WTC11 (cell line): ENCODE measurements at regions of chr9 and their contacts with region 1.

Region 1: GRCh38 chr9:124617471-124618141 is 110.4 kb upstream of the NR5A1 start:
- DNase-seq: peak; percentile 90
- ATAC-seq: peak; percentile 90
- H3K4me3 Mint-ChIP-seq: no peak overlapping the region
- H3K27ac Mint-ChIP-seq: peak overlapping the region; percentile 94
- H3K4me1 Mint-ChIP-seq: peaks cover 56% of the 10 kb centered on the region
- H3K27me3 Mint-ChIP-seq: no peaks in the 10 kb centered on the region
- CTCF ChIP-seq: peak; percentile 89

Region 2: GRCh38 chr9:124537926-124538325 is 79.7 kb before region 1 on chr9:
- CTCF ChIA-PET with region 1: interaction called, 20 read pairs
- POLR2A ChIA-PET with region 1: no interaction called
- DNase-seq: no peak
- ATAC-seq: no peak
- H3K4me3 Mint-ChIP-seq: no peak overlapping the region
- H3K27ac Mint-ChIP-seq: no peak overlapping the region
- H3K4me1 Mint-ChIP-seq: no peaks in the 10 kb centered on the region
- H3K27me3 Mint-ChIP-seq: no peaks in the 10 kb centered on the region
- CTCF ChIP-seq: no peak

Region 3: DNA sequence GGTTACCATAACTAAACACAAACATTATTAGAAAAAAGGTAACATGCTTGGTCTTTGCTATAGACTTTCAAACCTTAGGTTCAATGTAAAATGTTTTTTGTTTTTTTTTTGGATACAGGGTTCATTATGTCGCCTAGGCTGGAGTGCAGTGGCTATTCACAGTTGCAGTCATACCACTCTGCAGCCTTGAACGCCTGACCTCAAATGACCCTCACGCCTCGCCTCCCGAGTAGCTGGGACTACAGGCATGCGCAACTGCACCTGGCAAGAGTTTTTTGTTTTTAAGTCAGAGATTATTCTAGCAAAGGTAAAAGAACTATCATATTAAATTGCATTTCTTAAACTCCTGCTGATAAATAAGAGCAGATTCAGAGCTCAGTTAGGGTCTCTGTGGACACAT is 55.3 kb before region 1 on chr9:
- CTCF ChIA-PET with region 1: interaction called, 14 read pairs
- POLR2A ChIA-PET with region 1: no interaction called
- DNase-seq: no peak
- ATAC-seq: no peak
- H3K4me3 Mint-ChIP-seq: no peak overlapping the region
- H3K27ac Mint-ChIP-seq: no peak overlapping the region
- H3K4me1 Mint-ChIP-seq: peaks cover 29% of the 10 kb centered on the region
- H3K27me3 Mint-ChIP-seq: no peaks in the 10 kb centered on the region
- CTCF ChIP-seq: no peak

Region 4: GRCh38 chr9:124593651-124594058 is 24.0 kb before region 1 on chr9:
- CTCF ChIA-PET with region 1: interaction called, 85 read pairs
- POLR2A ChIA-PET with region 1: no interaction called
- DNase-seq: peak; percentile 31
- ATAC-seq: peak; percentile 85
- H3K4me3 Mint-ChIP-seq: peak overlapping the region; percentile 60
- H3K27ac Mint-ChIP-seq: peak overlapping the region; percentile 95
- H3K4me1 Mint-ChIP-seq: peaks cover 81% of the 10 kb centered on the region
- H3K27me3 Mint-ChIP-seq: no peaks in the 10 kb centered on the region
- CTCF ChIP-seq: no peak

Region 5: DNA sequence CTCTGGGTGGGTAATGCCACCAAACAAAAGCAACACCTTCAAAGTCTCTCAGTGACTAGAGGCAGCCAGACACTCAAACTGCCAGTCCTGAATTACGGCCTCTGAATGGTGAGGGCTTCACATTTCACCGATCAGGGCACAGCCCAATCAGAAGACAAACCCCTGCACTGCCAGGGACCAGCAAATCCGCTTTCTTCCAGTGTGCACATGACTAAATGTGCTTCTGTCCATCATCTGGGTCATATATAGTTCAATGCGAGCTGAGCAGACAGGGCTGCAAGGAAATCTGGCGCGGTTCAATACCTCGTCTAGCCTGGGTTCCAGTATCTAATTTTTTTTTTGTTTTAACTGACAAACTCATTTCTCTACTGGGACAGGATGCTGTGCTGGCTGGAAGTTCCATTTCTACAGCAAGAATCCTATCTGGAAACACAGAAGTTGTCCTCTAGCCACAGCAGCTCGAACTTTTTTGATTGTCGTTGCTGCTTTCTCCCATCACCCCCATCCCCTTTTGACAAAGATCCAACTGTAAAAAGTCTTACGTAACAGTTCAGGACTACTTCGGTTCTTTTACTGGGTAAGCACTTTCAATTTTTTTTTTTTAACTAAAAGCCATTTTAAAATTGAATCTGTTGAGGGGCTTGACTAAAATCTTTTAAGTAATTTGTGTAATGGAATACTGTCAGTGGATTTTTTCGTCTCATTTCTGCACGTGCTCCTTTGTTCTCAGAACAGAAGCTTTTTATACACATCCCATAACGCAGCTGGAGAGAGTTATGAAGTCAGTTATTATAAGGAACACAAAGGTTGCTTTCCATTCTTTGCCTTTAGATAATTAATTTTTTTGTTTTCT is 40.8 kb after region 1 on chr9:
- CTCF ChIA-PET with region 1: interaction called, 28 read pairs
- POLR2A ChIA-PET with region 1: no interaction called
- DNase-seq: peak; percentile 30
- ATAC-seq: peak; percentile 92
- H3K4me3 Mint-ChIP-seq: peak overlapping the region; percentile 66
- H3K27ac Mint-ChIP-seq: peak overlapping the region; percentile 98
- H3K4me1 Mint-ChIP-seq: peaks cover 50% of the 10 kb centered on the region
- H3K27me3 Mint-ChIP-seq: no peaks in the 10 kb centered on the region
- CTCF ChIP-seq: no peak

Region 6: DNA sequence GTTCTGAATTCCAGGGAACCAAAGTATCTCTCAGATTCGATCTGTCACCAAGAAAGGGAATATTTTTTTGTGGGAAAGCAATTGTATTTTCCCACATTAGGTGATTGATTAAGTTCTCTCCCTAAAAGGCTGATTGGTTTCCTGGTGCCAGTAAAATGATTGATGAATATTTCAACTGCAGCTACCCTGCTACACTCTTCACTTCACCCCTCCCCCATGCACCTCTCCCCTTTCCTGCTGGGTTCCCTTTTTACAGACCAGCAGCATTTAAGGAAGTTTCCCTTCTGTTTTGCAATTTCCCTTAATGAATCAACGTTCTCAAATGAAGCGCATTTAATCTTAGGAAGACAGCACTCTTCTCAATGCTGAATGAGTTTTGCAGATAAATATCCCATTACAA is 140.5 kb after region 1 on chr9:
- CTCF ChIA-PET with region 1: interaction called, 12 read pairs
- POLR2A ChIA-PET with region 1: no interaction called
- DNase-seq: no peak
- ATAC-seq: peak; percentile 35
- H3K4me3 Mint-ChIP-seq: peak overlapping the region; percentile 65
- H3K27ac Mint-ChIP-seq: peak overlapping the region; percentile 98
- H3K4me1 Mint-ChIP-seq: peaks cover 92% of the 10 kb centered on the region
- H3K27me3 Mint-ChIP-seq: no peaks in the 10 kb centered on the region
- CTCF ChIP-seq: no peak

Region 7: GRCh38 chr9:124852829-124853531 is 235.4 kb after region 1 on chr9 and contains the start of gene WDR38:
- CTCF ChIA-PET with region 1: interaction called, 21 read pairs
- POLR2A ChIA-PET with region 1: no interaction called
- DNase-seq: peak; percentile 80
- ATAC-seq: peak; percentile 60
- H3K4me3 Mint-ChIP-seq: peak within 1 kb of the TSS; percentile 62
- H3K27ac Mint-ChIP-seq: no peak within 1 kb of the TSS; the same call in 1 of the 2 replicates
- H3K4me1 Mint-ChIP-seq: peaks cover 9% of the 10 kb centered on the region
- H3K27me3 Mint-ChIP-seq: no peaks in the 10 kb centered on the region
- CTCF ChIP-seq: peak; percentile 97
- total RNA-seq, gene WDR38: not detected in 3 replicates